ENCODE measurements at regions of chr4 and their contacts with region 1.

Region 1: GRCh38 chr4:46270986-46271596 is 118.8 kb downstream of the GABRA2 start:
- DNase-seq: peak; percentile 53 to 76 (median 76)
- H3K4me3 ChIP-seq: peak overlapping the region in 1 of 7 experiments; percentile 16
- H3K27ac ChIP-seq: no peak overlapping the region
- H3K4me1 ChIP-seq: peaks cover 0 to 5% (median 0%) of the 10 kb centered on the region in 4 experiments
- H3K27me3 ChIP-seq: no peaks in the 10 kb centered on the region

Region 2: GRCh38 chr4:45453258-45453853 is 817.7 kb before region 1 on chr4:
- CTCF ChIA-PET with region 1: interaction called, 25 read pairs
- POLR2A ChIA-PET with region 1: no interaction called
- DNase-seq: peak; percentile 29 to 51 (median 51)
- H3K4me3 ChIP-seq: no peak overlapping the region
- H3K27ac ChIP-seq: no peak overlapping the region
- H3K4me1 ChIP-seq: no peaks in the 10 kb centered on the region
- H3K27me3 ChIP-seq: no peaks in the 10 kb centered on the region

Region 3: GRCh38 chr4:45550766-45551366 is 720.2 kb before region 1 on chr4:
- CTCF ChIA-PET with region 1: interaction called, 11 read pairs
- POLR2A ChIA-PET with region 1: no interaction called
- DNase-seq: peak in 2 of 3 donors; percentile 25 to 28
- H3K4me3 ChIP-seq: peak overlapping the region in 1 of 7 experiments; percentile 53
- H3K27ac ChIP-seq: no peak overlapping the region
- H3K4me1 ChIP-seq: no peaks in the 10 kb centered on the region
- H3K27me3 ChIP-seq: no peaks in the 10 kb centered on the region